Left lung (tissue), 14 donors: ENCODE measurements at regions of chr1 and their contacts with region 1.

Region 1: DNA sequence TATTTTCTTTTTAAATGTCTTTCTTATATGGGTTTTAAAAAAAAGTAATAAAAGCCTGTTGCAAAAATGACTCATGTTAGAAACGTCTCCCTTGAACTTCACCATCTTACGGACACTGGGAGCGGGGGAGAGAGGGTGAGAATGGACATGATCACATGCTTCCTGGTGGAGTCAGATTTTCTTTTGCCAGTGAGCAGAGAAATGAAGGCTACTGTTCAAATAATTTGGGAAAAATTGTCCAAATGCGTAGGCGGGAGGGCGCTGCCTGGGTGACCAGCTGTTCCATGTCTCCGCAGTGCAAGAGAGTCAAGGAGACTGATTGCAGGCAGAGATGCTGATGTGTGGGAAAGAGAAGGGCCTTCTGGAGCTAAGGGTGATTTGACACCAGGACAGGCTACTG is 23.1 kb downstream of the EIF2D start:
- DNase-seq: peak in 2 of 4 donors; percentile 31 to 50
- ATAC-seq: peak; percentile 53
- H3K4me3 ChIP-seq: no peak overlapping the region
- H3K27ac ChIP-seq: peak overlapping the region; percentile 28 to 30
- H3K4me1 ChIP-seq: peaks cover 4 to 40% of the 10 kb centered on the region in 2 donors
- H3K27me3 ChIP-seq: no peaks in the 10 kb centered on the region
- CTCF ChIP-seq: no peak

Region 2: DNA sequence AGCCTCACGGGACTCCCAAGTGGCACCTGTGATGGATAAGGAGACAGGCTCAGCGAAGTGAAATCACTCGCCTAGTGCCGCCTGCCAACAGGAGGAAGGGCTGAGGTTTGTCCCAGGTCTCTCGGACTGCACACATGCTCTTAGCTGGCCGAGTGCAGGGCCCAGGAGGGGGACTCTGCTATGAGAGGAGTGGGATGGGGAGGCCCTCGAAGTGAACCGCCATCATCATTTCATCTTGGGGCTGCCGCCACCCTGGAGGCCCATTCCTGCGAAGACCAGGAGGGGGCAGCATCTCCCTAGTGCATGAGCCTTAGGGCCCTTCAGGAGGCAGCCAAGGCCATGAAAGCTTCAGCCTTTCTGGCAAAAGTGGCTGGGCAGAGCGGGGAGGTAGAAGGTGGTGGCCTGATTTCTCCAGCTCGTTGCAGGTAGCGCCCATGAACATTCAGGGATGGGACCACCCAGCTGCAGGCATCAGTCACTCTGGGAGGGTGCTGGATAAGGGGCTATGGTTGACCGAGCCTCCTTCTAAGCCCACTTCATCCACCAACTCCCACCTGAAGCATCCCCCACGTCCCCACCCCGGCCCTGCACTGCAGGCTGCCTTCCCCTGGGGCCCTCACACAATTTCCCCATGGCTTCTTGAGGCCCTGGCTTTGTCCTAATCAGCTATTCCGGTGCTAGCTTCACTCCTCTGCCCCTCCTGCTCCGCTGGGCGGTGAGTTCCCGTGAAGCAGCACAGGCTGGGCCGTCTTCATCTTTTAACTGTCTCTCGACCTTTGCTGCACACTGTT is 99.0 kb before region 1 on chr1:
- intact Hi-C with region 1: loop called in 1 of 2 experiments (anchors 5 kb)
- DNase-seq: peak in 3 of 4 donors; percentile 69 to 89 (median 82)
- ATAC-seq: peak; percentile 98
- H3K4me3 ChIP-seq: no peak overlapping the region
- H3K27ac ChIP-seq: no peak overlapping the region
- H3K4me1 ChIP-seq: peaks cover 3 to 9% of the 10 kb centered on the region in 2 donors
- H3K27me3 ChIP-seq: no peaks in the 10 kb centered on the region
- CTCF ChIP-seq: peak; percentile 90 to 97